Naive thymus-derived CD4-positive, alpha-beta T cell (primary cell): ENCODE measurements at regions of chr14 and their contacts with region 1.

Region 1: DNA sequence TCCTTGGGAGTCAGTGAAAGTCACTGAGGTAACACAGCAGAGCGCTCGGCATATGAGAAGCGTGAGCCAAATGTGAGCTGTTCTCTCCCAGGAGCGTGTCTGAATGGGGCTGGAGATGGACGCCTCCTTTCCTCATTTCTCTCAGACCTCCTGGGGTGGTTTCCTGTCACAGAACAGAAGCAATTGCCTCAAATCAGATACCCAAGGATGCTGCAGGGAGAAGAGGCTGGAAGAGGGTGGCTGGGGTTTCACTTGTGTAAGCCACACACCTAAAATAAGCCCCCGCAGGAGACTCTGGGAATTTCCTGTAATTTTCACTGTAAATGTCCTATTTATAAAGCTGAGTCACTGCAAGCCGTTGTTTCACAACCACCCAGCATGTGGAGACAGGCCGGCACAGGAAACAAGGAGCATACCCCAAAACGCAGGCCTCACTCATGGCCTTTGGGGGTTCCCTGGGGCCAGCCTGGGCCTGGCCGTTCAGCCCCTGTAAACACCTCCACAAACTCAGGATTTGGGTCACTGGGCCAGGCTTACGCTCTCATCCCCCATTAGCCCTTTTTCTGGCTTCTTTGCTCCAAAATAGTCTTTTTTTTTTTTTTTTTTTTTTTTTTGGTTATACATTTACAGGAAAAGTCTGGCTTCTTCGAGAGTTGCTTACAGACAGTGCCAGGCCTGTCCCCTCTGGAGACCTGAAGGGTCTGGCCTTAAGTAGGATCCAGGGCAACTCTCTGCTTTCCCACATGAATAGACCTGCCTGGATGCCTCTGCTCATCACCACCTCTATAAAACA is 55.3 kb downstream of the VCPKMT start:
- DNase-seq: peak in 2 of 9 donors; percentile 27 to 61
- ATAC-seq: no peak
- H3K4me3 ChIP-seq: peak overlapping the region; percentile 53
- H3K4me3 Mint-ChIP-seq: peak overlapping the region; percentile 74 to 94 (median 89)
- H3K27ac ChIP-seq: peak overlapping the region; percentile 79
- H3K27ac Mint-ChIP-seq: peak overlapping the region; percentile 96 to 100 (median 99)
- H3K4me1 ChIP-seq: peaks cover 61 to 69% of the 10 kb centered on the region in 2 donors
- H3K4me1 Mint-ChIP-seq: peaks cover 70 to 93% (median 89%) of the 10 kb centered on the region in 7 donors
- H3K27me3 ChIP-seq: no peaks in the 10 kb centered on the region
- H3K27me3 Mint-ChIP-seq: no peaks in the 10 kb centered on the region

Region 2: GRCh38 chr14:49625404-49625803 is 435.7 kb before region 1 on chr14:
- CTCF ChIA-PET with region 1: no interaction called
- POLR2A ChIA-PET with region 1: no interaction called
- intact Hi-C with region 1: no loop called
- DNase-seq: no peak
- ATAC-seq: no peak
- H3K4me3 ChIP-seq: no peak overlapping the region
- H3K4me3 Mint-ChIP-seq: no peak overlapping the region
- H3K27ac ChIP-seq: peak overlapping the region; percentile 41
- H3K27ac Mint-ChIP-seq: peak overlapping the region in 3 of 9 donors; percentile 28 to 71 (median 32)
- H3K4me1 ChIP-seq: peaks cover 19 to 31% of the 10 kb centered on the region in 2 donors
- H3K4me1 Mint-ChIP-seq: peaks cover 29 to 63% (median 49%) of the 10 kb centered on the region in 7 donors
- H3K27me3 ChIP-seq: no peaks in the 10 kb centered on the region
- H3K27me3 Mint-ChIP-seq: no peaks in the 10 kb centered on the region

Region 3: DNA sequence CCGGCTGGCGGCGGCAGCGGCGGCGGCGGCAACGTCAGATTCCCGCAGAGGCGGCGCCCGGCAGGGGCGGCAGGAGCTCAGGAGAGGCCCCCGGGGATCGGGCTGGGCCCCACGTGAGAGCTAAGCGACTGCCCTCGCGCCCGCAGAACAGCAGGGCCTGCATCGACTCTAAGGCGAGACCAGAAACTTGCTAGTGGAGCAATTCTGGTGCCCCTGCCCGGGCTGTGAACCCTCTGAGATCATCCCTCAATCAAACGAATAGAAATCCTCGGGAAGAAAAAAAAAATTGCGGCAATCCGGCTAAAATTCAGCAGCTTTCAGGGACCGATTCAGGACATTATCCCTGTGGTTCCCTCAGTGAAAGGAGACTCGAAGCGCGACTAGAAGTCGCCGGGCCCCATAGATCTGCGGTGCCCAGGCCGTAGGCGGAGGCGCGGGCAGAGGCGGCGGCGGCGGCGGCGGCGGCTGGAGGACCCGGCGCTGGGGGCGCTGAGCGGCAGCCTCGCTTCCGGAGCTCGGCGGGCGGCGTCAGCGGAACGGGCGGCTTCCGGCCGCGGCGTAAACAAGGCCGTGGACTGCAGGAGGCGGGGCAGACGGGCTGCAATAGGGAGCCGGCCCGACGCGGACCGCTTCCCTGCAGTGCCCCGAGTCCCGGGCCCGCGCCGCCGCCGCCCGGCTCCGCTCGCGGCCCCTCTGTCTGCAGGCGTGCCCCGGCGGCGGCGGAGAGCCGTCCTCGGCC is 293.3 kb before region 1 on chr14 and contains the start of gene KLHDC2:
- CTCF ChIA-PET with region 1: interaction called, 3 read pairs
- POLR2A ChIA-PET with region 1: interaction called, 3 read pairs
- intact Hi-C with region 1: loop called in 1 of 2 experiments (anchors 5 kb)
- DNase-seq: peak; percentile 84 to 94 (median 89)
- ATAC-seq: peak; percentile 88
- H3K4me3 ChIP-seq: peak within 1 kb of the TSS; percentile 62
- H3K4me3 Mint-ChIP-seq: peak within 1 kb of the TSS; percentile 95 to 99 (median 98)
- H3K27ac ChIP-seq: peak within 1 kb of the TSS; percentile 96
- H3K27ac Mint-ChIP-seq: peak within 1 kb of the TSS; percentile 98 to 100 (median 99)
- H3K4me1 ChIP-seq: peaks cover 26 to 27% of the 10 kb centered on the region in 2 donors
- H3K4me1 Mint-ChIP-seq: peaks cover 20 to 46% (median 40%) of the 10 kb centered on the region in 7 donors
- H3K27me3 ChIP-seq: no peaks in the 10 kb centered on the region
- H3K27me3 Mint-ChIP-seq: peaks cover 0 to 2% (median 0%) of the 10 kb centered on the region in 5 donors
- total RNA-seq, gene KLHDC2: 33.2 to 105 (median 84.7) TPM

Region 4: GRCh38 chr14:49879683-49880204 is 181.3 kb before region 1 on chr14:
- CTCF ChIA-PET with region 1: interaction called, 11 read pairs
- POLR2A ChIA-PET with region 1: interaction called, 9 read pairs
- intact Hi-C with region 1: loop called (anchors 1 kb)
- DNase-seq: peak in 8 of 9 donors; percentile 32 to 64 (median 48)
- ATAC-seq: peak; percentile 92
- H3K4me3 ChIP-seq: no peak overlapping the region
- H3K4me3 Mint-ChIP-seq: no peak overlapping the region
- H3K27ac ChIP-seq: no peak overlapping the region
- H3K27ac Mint-ChIP-seq: peak overlapping the region in 6 of 9 donors; percentile 17 to 74 (median 44)
- H3K4me1 ChIP-seq: peaks cover 0 to 6% of the 10 kb centered on the region in 2 donors
- H3K4me1 Mint-ChIP-seq: peaks cover 10 to 30% (median 12%) of the 10 kb centered on the region in 7 donors
- H3K27me3 ChIP-seq: no peaks in the 10 kb centered on the region
- H3K27me3 Mint-ChIP-seq: peaks cover 0 to 3% (median 0%) of the 10 kb centered on the region in 5 donors

Region 5: GRCh38 chr14:49977126-49977841 is 83.8 kb before region 1 on chr14:
- CTCF ChIA-PET with region 1: interaction called, 6 read pairs
- POLR2A ChIA-PET with region 1: interaction called, 35 read pairs
- intact Hi-C with region 1: loop called in 1 of 2 experiments (anchors 1 kb)
- DNase-seq: peak in 8 of 9 donors; percentile 33 to 77 (median 64)
- ATAC-seq: peak; percentile 87
- H3K4me3 ChIP-seq: peak overlapping the region; percentile 58
- H3K4me3 Mint-ChIP-seq: peak overlapping the region; percentile 64 to 85 (median 80)
- H3K27ac ChIP-seq: peak overlapping the region; percentile 71
- H3K27ac Mint-ChIP-seq: peak overlapping the region; percentile 88 to 99 (median 97)
- H3K4me1 ChIP-seq: peaks cover 44 to 76% of the 10 kb centered on the region in 2 donors
- H3K4me1 Mint-ChIP-seq: peaks cover 58 to 99% (median 85%) of the 10 kb centered on the region in 7 donors
- H3K27me3 ChIP-seq: no peaks in the 10 kb centered on the region
- H3K27me3 Mint-ChIP-seq: no peaks in the 10 kb centered on the region

Region 6: DNA sequence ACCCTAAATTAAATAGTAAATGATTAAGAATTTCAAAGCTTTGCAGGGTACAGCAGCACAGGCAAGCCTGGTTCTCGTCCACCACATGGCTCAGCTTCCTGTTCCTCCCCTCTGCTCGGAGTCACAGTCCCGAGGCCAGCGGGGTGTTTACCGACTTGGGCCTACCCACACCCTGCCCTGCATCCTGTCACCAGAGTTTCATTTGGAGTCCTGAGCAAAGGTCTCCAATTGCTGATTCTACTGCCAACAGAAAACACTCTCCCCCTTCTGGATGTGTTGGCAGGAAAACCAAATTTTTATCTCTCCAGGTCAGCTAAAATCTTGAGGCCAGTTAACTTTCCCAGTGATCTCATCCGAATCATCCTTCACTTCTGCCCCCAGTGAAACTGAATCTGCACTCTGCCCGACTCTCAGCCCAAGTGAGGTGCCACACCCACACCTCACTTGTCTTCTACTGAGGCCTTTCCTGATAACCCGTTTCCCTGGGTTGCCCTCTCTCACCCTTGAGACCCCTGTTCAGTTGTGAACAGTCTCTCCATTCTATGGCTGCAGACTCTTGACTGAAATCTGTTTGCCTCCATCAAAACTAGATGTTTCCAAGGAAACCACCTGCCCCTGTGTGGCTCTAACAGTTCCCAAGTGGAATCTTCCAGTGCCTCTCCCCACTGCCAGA is 15.9 kb before region 1 on chr14:
- CTCF ChIA-PET with region 1: interaction called, 27 read pairs
- POLR2A ChIA-PET with region 1: interaction called, 102 read pairs
- intact Hi-C with region 1: loop called (anchors 1 kb)
- DNase-seq: peak in 8 of 9 donors; percentile 39 to 74 (median 62)
- ATAC-seq: peak; percentile 86
- H3K4me3 ChIP-seq: no peak overlapping the region
- H3K4me3 Mint-ChIP-seq: peak overlapping the region; percentile 50 to 89 (median 74)
- H3K27ac ChIP-seq: peak overlapping the region; percentile 69
- H3K27ac Mint-ChIP-seq: peak overlapping the region; percentile 88 to 99 (median 96)
- H3K4me1 ChIP-seq: peaks cover 51 to 63% of the 10 kb centered on the region in 2 donors
- H3K4me1 Mint-ChIP-seq: peaks cover 49 to 83% (median 71%) of the 10 kb centered on the region in 7 donors
- H3K27me3 ChIP-seq: no peaks in the 10 kb centered on the region
- H3K27me3 Mint-ChIP-seq: no peaks in the 10 kb centered on the region

Region 7: DNA sequence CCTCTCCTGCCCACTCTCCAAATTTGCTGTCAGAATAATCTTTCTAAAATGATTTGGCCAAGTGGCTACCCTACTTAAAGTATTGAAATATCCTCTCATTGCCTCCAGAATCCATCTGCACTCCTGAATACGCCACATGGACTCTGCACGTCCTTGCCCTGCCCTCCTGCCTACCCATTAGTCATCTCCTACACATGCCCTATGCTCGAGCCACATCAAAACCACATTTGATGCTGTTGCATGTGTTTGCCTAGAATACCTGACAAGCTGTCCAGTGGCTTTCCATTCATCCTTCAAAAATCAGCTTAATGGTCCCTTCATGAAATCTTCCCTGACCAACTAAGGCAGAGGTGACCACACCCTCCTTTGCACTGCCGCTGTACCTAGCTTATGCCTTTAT is 38.3 kb after region 1 on chr14:
- CTCF ChIA-PET with region 1: interaction called, 23 read pairs
- POLR2A ChIA-PET with region 1: interaction called, 131 read pairs
- intact Hi-C with region 1: loop called in 1 of 2 experiments (anchors 1 kb)
- DNase-seq: no peak
- ATAC-seq: no peak
- H3K4me3 ChIP-seq: no peak overlapping the region
- H3K4me3 Mint-ChIP-seq: peak overlapping the region in 9 of 10 donors; percentile 9 to 61 (median 38)
- H3K27ac ChIP-seq: no peak overlapping the region
- H3K27ac Mint-ChIP-seq: peak overlapping the region; percentile 13 to 87 (median 79)
- H3K4me1 ChIP-seq: peaks cover 23 to 67% of the 10 kb centered on the region in 2 donors
- H3K4me1 Mint-ChIP-seq: peaks cover 39 to 92% (median 76%) of the 10 kb centered on the region in 7 donors
- H3K27me3 ChIP-seq: no peaks in the 10 kb centered on the region
- H3K27me3 Mint-ChIP-seq: peaks cover 0 to 5% (median 0%) of the 10 kb centered on the region in 5 donors

Region 8: GRCh38 chr14:50116181-50116956 is 55.3 kb after region 1 on chr14 and contains the start of gene VCPKMT:
- CTCF ChIA-PET with region 1: interaction called, 4 read pairs
- POLR2A ChIA-PET with region 1: interaction called, 3 read pairs
- intact Hi-C with region 1: loop called in 1 of 2 experiments (anchors 1 kb)
- DNase-seq: peak; percentile 93 to 97 (median 97)
- ATAC-seq: peak; percentile 99
- H3K4me3 ChIP-seq: peak within 1 kb of the TSS; percentile 74
- H3K4me3 Mint-ChIP-seq: peak within 1 kb of the TSS; percentile 92 to 98 (median 96)
- H3K27ac ChIP-seq: peak within 1 kb of the TSS; percentile 94
- H3K27ac Mint-ChIP-seq: peak within 1 kb of the TSS; percentile 97 to 99 (median 98)
- H3K4me1 ChIP-seq: peaks cover 18 to 20% of the 10 kb centered on the region in 2 donors
- H3K4me1 Mint-ChIP-seq: peaks cover 11 to 37% (median 23%) of the 10 kb centered on the region in 7 donors
- H3K27me3 ChIP-seq: no peaks in the 10 kb centered on the region
- H3K27me3 Mint-ChIP-seq: no peaks in the 10 kb centered on the region
- total RNA-seq, gene VCPKMT: 10.3 to 25.9 (median 17.4) TPM

Region 9: DNA sequence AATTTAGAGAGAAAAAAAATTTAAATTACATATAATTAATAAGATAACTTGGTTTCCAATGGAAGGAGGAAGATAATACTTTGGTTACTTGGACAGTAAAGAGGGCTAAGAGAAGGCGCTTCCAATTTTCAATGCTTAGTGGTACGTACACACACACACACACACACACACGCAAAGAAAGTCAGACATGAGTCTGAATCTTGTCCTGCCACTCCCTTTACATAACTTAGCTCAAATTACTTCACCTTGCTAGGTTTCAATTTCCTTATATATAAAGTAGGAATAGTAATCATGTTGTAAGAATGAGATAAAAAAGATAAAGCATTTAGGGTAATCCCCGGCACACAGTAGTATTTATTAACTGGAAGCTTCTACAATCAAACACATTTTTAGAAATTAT is 95.0 kb after region 1 on chr14:
- CTCF ChIA-PET with region 1: no interaction called
- POLR2A ChIA-PET with region 1: no interaction called
- intact Hi-C with region 1: no loop called
- DNase-seq: no peak
- ATAC-seq: no peak
- H3K4me3 ChIP-seq: no peak overlapping the region
- H3K4me3 Mint-ChIP-seq: no peak overlapping the region
- H3K27ac ChIP-seq: no peak overlapping the region
- H3K27ac Mint-ChIP-seq: peak overlapping the region in 1 of 9 donors; percentile 4
- H3K4me1 ChIP-seq: no peaks in the 10 kb centered on the region
- H3K4me1 Mint-ChIP-seq: peaks cover 0 to 2% (median 0%) of the 10 kb centered on the region in 7 donors
- H3K27me3 ChIP-seq: no peaks in the 10 kb centered on the region
- H3K27me3 Mint-ChIP-seq: no peaks in the 10 kb centered on the region

Region 10: DNA sequence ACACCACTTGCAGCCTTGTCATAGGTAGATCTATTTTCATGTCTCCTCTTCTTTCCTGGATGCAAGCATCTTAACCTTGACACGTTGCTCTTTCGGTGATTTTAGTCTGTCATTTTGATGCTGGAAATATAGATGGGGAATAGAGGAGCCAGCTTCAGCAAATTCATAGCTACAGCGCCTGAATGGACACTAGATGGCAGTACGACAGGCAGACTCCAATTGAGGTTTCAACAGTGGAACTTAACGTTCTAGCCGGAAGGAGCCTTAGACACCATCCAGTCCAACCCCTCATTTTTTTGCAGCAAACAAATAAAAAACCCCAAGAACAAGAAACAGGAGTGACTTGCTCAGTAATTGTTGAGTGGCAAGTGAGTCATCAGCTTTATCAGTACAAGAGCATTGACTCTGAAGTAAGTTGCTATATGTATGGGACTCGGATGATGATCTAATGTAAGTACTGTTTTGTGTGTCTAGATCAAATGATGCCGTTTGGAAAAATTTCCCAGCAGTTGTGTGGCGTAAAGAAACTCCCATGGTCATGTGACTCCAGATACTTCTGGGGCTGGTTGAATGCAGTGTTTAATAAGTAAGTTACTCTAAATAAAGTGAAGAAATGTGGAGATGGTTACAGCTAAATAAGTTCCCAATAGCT is 260.1 kb after region 1 on chr14:
- CTCF ChIA-PET with region 1: no interaction called
- POLR2A ChIA-PET with region 1: no interaction called
- intact Hi-C with region 1: no loop called
- DNase-seq: peak in 8 of 9 donors; percentile 52 to 83 (median 76)
- ATAC-seq: peak; percentile 99
- H3K4me3 ChIP-seq: peak overlapping the region; percentile 15
- H3K4me3 Mint-ChIP-seq: no peak overlapping the region
- H3K27ac ChIP-seq: peak overlapping the region; percentile 11
- H3K27ac Mint-ChIP-seq: no peak overlapping the region
- H3K4me1 ChIP-seq: peaks cover 0 to 4% of the 10 kb centered on the region in 2 donors
- H3K4me1 Mint-ChIP-seq: peaks cover 8 to 34% (median 27%) of the 10 kb centered on the region in 7 donors
- H3K27me3 ChIP-seq: no peaks in the 10 kb centered on the region
- H3K27me3 Mint-ChIP-seq: no peaks in the 10 kb centered on the region